ENCODE measurements at regions of chr4 and their contacts with region 1.

Region 1: DNA sequence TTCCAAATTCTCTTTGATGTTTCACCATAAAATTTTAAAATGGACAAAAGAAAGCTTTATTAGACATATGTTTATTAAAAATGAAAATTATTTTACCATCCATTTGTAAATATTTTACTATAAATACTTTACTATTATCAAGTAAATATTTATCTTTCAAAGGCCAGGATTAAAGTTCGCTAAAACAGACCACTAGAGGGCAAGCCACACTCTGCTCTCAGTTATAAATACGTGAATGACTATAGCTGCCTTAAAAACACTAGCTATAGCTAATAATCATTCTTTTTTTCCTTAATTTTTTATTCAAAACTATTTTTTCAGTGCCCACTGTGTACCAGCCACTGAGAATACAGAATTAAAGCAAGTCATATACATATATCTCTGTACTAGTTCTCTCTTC is 38.6 kb downstream of the UNC5C start:
- DNase-seq: no peak
- ATAC-seq: peak; percentile 81
- H3K4me3 ChIP-seq: no peak overlapping the region
- H3K27ac ChIP-seq: no peak overlapping the region
- H3K4me1 ChIP-seq: no peaks in the 10 kb centered on the region
- H3K27me3 ChIP-seq: no peaks in the 10 kb centered on the region
- CTCF ChIP-seq: peak; percentile 46 to 62 (median 53)
- EP300 ChIP-seq: no peak
- POLR2A ChIP-seq: no peak
- RAD21 ChIP-seq: peak; percentile 55

Region 2: GRCh38 chr4:95499291-95499696 is 10.9 kb before region 1 on chr4:
- CTCF ChIA-PET with region 1: interaction called, 25 read pairs
- POLR2A ChIA-PET with region 1: no interaction called
- RAD21 ChIA-PET with region 1: interaction called, 3 read pairs
- SMC1A ChIA-PET with region 1: interaction called, 4 read pairs
- in situ Hi-C with region 1: no loop called
- intact Hi-C with region 1: no loop called
- DNase-seq: no peak
- ATAC-seq: no peak
- H3K4me3 ChIP-seq: no peak overlapping the region
- H3K27ac ChIP-seq: no peak overlapping the region
- H3K4me1 ChIP-seq: no peaks in the 10 kb centered on the region
- H3K27me3 ChIP-seq: no peaks in the 10 kb centered on the region
- CTCF ChIP-seq: no peak
- EP300 ChIP-seq: no peak
- POLR2A ChIP-seq: no peak
- RAD21 ChIP-seq: no peak

Region 3: GRCh38 chr4:95528388-95528948 is 18.3 kb after region 1 on chr4:
- CTCF ChIA-PET with region 1: interaction called, 19 read pairs
- POLR2A ChIA-PET with region 1: interaction called, 4 read pairs
- RAD21 ChIA-PET with region 1: interaction called, 14 read pairs
- SMC1A ChIA-PET with region 1: interaction called, 19 read pairs
- in situ Hi-C with region 1: no loop called
- intact Hi-C with region 1: no loop called
- DNase-seq: no peak
- ATAC-seq: peak; percentile 50
- H3K4me3 ChIP-seq: no peak overlapping the region
- H3K27ac ChIP-seq: no peak overlapping the region
- H3K4me1 ChIP-seq: no peaks in the 10 kb centered on the region; the same call in 1 of the 2 replicates
- H3K27me3 ChIP-seq: no peaks in the 10 kb centered on the region
- CTCF ChIP-seq: no peak
- EP300 ChIP-seq: no peak
- POLR2A ChIP-seq: no peak
- RAD21 ChIP-seq: no peak

Region 4: GRCh38 chr4:95549246-95550114 is 39.3 kb after region 1 on chr4:
- CTCF ChIA-PET with region 1: interaction called, 87 read pairs
- POLR2A ChIA-PET with region 1: interaction called, 3 read pairs
- RAD21 ChIA-PET with region 1: interaction called, 63 read pairs
- SMC1A ChIA-PET with region 1: interaction called, 89 read pairs
- in situ Hi-C with region 1: no loop called
- intact Hi-C with region 1: loop called (anchors 1 kb)
- DNase-seq: peak; percentile 38
- ATAC-seq: peak; percentile 75
- H3K4me3 ChIP-seq: peak overlapping the region; percentile 46; the same call in 1 of the 2 replicates
- H3K27ac ChIP-seq: no peak overlapping the region
- H3K4me1 ChIP-seq: no peaks in the 10 kb centered on the region
- H3K27me3 ChIP-seq: peaks cover 0 to 17% of the 10 kb centered on the region in 2 experiments; a peak in 2 of 4 replicates
- CTCF ChIP-seq: no peak
- EP300 ChIP-seq: peak; percentile 67 to 70; a peak in 2 of 4 replicates
- POLR2A ChIP-seq: no peak
- RAD21 ChIP-seq: no peak